ENCODE measurements at regions of chr1 and their contacts with region 1.

Region 1: GRCh38 chr1:171984850-171985485 is 143.7 kb downstream of the DNM3 start:
- DNase-seq: peak; percentile 52
- H3K4me3 Mint-ChIP-seq: no peak overlapping the region
- H3K27ac Mint-ChIP-seq: no peak overlapping the region
- H3K4me1 Mint-ChIP-seq: no peaks in the 10 kb centered on the region
- H3K27me3 Mint-ChIP-seq: no peaks in the 10 kb centered on the region
- CTCF ChIP-seq: peak; percentile 85

Region 2: GRCh38 chr1:171576144-171576543 is 408.8 kb before region 1 on chr1:
- CTCF ChIA-PET with region 1: no interaction called
- POLR2A ChIA-PET with region 1: no interaction called
- intact Hi-C with region 1: no loop called
- DNase-seq: no peak
- H3K4me3 Mint-ChIP-seq: no peak overlapping the region
- H3K27ac Mint-ChIP-seq: no peak overlapping the region
- H3K4me1 Mint-ChIP-seq: no peaks in the 10 kb centered on the region
- H3K27me3 Mint-ChIP-seq: no peaks in the 10 kb centered on the region
- CTCF ChIP-seq: no peak

Region 3: DNA sequence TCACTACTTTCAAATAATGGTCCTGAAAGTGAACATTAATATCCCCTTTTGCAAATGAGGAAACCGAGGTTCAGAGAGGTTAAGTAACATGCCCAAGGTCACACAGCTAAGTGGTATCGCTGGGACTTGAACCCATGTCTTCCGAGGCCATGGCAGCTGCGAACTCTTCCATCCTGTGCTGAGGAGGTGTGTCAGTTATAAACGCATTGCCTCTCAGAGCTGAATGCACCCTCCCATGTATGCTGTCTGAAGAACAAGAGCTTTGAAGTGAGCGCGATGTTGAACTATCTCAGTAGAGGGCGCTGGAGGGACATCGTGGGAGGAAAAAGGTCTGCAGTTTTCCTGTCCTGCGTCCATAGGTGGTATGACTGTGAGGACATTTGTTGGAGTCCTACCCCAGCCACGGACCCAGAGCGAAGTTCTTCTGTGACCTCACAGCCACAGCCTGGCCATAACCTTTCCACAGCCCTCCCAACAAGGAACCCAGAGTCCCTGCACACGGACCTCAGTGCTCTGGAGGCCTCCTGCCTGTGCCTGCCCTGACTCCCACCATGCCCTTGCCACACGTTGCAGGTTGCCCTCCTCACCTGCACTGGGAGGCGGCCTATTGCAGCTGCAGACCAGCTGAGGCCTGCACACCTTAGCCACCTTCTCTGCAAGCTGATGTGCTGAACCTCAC is 340.0 kb before region 1 on chr1:
- CTCF ChIA-PET with region 1: interaction called, 72 read pairs
- POLR2A ChIA-PET with region 1: no interaction called
- intact Hi-C with region 1: loop called (anchors 1 kb)
- DNase-seq: peak; percentile 94
- H3K4me3 Mint-ChIP-seq: no peak overlapping the region
- H3K27ac Mint-ChIP-seq: no peak overlapping the region
- H3K4me1 Mint-ChIP-seq: no peaks in the 10 kb centered on the region
- H3K27me3 Mint-ChIP-seq: no peaks in the 10 kb centered on the region
- CTCF ChIP-seq: peak; percentile 74

Region 4: GRCh38 chr1:171801487-171801891 is 183.5 kb before region 1 on chr1:
- CTCF ChIA-PET with region 1: interaction called, 1,502 read pairs
- POLR2A ChIA-PET with region 1: interaction called, 54 read pairs
- intact Hi-C with region 1: loop called (anchors 1 kb)
- DNase-seq: peak; percentile 73
- H3K4me3 Mint-ChIP-seq: no peak overlapping the region
- H3K27ac Mint-ChIP-seq: no peak overlapping the region
- H3K4me1 Mint-ChIP-seq: no peaks in the 10 kb centered on the region
- H3K27me3 Mint-ChIP-seq: no peaks in the 10 kb centered on the region
- CTCF ChIP-seq: peak; percentile 88

Region 5: DNA sequence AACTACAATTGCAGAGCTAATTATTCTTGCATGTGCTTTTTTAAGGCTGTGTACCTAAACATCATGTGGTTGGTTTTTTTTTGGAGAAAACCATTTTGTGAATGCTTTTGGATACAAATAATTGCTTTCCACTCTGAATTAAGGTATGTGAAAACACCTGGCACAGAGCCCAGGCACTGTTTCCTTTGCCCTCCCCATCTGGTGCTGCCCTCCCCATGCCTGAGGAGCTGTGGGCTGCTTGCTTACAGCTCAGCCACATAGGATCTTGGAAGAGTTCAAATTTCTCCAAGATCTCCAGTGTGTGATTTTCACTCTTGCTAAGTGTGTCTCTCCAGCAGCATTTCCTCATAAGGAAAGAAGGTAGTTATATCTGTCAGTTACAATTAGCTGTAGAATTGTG is 115.9 kb before region 1 on chr1:
- CTCF ChIA-PET with region 1: interaction called, 13 read pairs
- POLR2A ChIA-PET with region 1: no interaction called
- intact Hi-C with region 1: no loop called
- DNase-seq: peak; percentile 31
- H3K4me3 Mint-ChIP-seq: no peak overlapping the region
- H3K27ac Mint-ChIP-seq: no peak overlapping the region
- H3K4me1 Mint-ChIP-seq: peaks cover 7% of the 10 kb centered on the region
- H3K27me3 Mint-ChIP-seq: peaks cover 9% of the 10 kb centered on the region
- CTCF ChIP-seq: no peak

Region 6: GRCh38 chr1:172002725-172003345 is 17.9 kb after region 1 on chr1:
- CTCF ChIA-PET with region 1: interaction called, 129 read pairs
- POLR2A ChIA-PET with region 1: interaction called, 3 read pairs
- intact Hi-C with region 1: no loop called
- DNase-seq: peak; percentile 70
- H3K4me3 Mint-ChIP-seq: no peak overlapping the region
- H3K27ac Mint-ChIP-seq: no peak overlapping the region
- H3K4me1 Mint-ChIP-seq: peaks cover 18% of the 10 kb centered on the region
- H3K27me3 Mint-ChIP-seq: no peaks in the 10 kb centered on the region
- CTCF ChIP-seq: peak; percentile 95

Region 7: DNA sequence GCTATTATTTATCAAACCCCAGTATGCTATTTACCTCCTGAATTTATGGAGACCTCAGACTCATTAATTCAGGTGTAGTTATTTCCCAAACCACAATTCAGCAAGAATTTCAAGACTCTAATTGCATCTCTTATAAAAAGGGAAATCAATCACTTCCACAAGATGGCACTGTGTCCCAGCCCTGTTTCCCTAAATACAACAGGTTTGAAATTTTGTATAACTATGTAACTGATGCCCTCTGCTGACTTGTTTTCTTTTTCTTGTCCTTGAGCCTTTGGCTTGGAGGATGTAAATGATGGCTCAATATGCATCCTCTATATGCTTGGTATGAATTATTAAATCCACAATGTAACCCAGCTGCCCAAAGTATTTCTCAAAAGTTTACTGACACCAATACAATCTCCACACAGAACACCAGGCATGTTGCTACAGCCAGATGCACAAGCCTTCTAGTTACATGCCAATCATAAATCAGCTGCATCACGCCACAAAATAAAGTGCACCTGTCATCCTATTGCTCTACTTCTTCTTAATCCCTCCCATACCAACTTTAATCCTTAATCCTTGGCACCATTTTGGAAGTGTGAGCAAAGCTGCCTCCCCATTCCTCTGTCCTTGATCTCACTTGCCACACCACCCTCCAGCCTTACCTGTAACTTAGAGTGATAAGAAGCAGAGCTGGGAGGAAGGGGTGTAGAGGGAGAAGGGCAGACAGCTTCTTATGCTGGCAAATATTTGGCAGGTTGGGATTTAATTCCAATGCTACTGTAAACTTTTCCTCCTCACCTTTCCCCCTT is 444.6 kb after region 1 on chr1:
- CTCF ChIA-PET with region 1: interaction called, 20 read pairs
- POLR2A ChIA-PET with region 1: no interaction called
- intact Hi-C with region 1: no loop called
- DNase-seq: peak; percentile 83
- H3K4me3 Mint-ChIP-seq: no peak overlapping the region
- H3K27ac Mint-ChIP-seq: no peak overlapping the region
- H3K4me1 Mint-ChIP-seq: peaks cover 5% of the 10 kb centered on the region
- H3K27me3 Mint-ChIP-seq: no peaks in the 10 kb centered on the region
- CTCF ChIP-seq: peak; percentile 78

Measured in MCF 10A (cell line).